ENCODE measurements at regions of chr3 and their contacts with region 1.

Region 1: DNA sequence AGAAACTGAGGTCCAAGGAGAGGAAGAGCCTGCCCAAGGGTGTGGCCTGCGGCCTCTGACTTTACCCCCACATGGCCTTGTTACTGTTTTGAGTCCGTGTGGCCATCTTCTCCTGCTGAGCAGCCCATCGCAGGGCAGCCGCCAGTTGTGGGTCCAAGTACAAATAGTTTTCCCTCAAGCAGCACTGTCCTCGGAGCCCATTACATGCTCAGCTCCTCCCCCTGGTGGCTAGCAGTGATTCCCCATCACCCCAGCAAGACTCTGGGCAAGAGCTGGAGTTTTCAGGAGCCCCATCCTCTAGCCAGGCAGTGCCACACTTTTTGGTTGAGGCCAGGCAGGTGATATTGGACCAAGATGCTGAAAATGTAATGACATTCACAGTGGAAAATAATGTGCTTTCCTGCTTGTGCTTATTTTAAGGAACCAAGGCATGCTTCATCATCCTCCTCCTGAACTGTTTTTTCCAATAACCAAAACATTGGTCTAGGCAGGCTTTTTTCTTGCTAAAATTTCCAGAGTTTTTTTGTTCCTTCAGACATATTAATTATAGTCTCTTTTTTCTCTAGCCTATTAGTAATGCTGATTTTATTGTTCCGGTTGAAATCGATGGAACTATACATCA is 23.2 kb upstream of the VILL start:
- DNase-seq: no peak
- H3K4me3 ChIP-seq: no peak overlapping the region
- H3K27ac ChIP-seq: no peak overlapping the region
- H3K4me1 ChIP-seq: peaks cover 0 to 23% (median 5%) of the 10 kb centered on the region in 3 donors
- H3K27me3 ChIP-seq: no peaks in the 10 kb centered on the region
- CTCF ChIP-seq: peak; percentile 65 to 86 (median 79)
- POLR2A ChIP-seq: no peak

Region 2: DNA sequence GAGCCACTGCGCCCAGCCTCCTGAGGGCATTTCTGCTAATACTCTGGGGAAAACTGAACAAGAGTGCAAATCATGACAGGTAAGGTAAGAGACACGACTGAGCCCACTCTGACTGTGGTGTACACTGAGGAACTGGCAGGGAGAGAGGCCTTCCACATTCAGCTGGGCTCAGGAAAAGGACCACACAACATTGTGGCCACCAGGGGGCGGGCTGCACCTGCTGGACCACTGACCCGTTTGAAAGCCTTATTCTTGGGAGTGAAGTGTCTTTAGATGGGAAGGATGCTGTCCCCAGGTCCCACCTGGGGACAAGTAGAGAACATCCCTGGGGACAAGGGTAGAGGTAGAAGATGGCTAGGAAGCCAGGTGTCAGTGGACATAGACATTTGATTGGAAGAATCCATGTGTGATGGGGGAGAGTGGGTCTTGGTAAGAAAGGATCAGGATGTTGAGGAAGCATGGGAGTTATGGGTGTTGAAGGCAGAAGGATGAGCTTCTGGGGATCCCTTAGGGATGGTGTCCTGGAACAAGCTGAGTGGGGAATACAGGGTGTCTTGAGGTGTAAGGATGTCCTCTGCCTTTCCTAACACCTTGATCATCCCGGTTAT is 111.9 kb before region 1 on chr3:
- intact Hi-C with region 1: loop called (anchors 2 kb)
- DNase-seq: peak; percentile 10
- H3K4me3 ChIP-seq: no peak overlapping the region
- H3K27ac ChIP-seq: peak overlapping the region in 2 of 4 donors; percentile 63 to 88
- H3K4me1 ChIP-seq: peaks cover 22 to 86% (median 31%) of the 10 kb centered on the region in 3 donors
- H3K27me3 ChIP-seq: no peaks in the 10 kb centered on the region
- CTCF ChIP-seq: peak; percentile 71 to 95 (median 92)
- POLR2A ChIP-seq: no peak

Region 3: DNA sequence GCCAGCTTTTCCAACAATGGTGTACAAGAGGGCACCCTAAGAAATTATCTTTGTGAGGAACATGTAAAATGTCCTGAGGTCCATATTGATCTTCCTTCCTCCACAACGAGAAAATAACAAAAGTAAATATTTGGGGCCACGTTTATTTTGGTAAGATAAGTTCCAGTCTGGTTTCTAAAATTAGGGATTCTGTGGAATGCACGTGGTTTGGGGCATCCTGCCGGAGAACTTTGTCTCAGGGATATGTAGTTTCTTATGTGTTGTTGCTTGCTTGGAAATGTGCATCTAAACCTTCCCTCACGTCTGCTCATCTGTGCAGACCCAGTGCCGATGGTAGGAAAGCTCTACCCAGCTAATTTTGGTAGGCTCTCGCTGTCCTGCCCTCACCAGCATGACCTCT is 42.9 kb before region 1 on chr3:
- intact Hi-C with region 1: no loop called
- DNase-seq: no peak
- H3K4me3 ChIP-seq: no peak overlapping the region
- H3K27ac ChIP-seq: peak overlapping the region in 3 of 4 donors; percentile 10 to 67 (median 45)
- H3K4me1 ChIP-seq: peaks cover 0 to 57% (median 14%) of the 10 kb centered on the region in 3 donors
- H3K27me3 ChIP-seq: no peaks in the 10 kb centered on the region
- CTCF ChIP-seq: no peak
- POLR2A ChIP-seq: no peak